ENCODE measurements at regions of chr2 and their contacts with region 1.

Region 1: GRCh38 chr2:40431600-40431955 is 20.3 kb downstream of the SLC8A1 start:
- DNase-seq: peak; percentile 77 to 81
- ATAC-seq: no peak
- H3K4me3 ChIP-seq: no peak overlapping the region
- H3K27ac ChIP-seq: peak overlapping the region; percentile 15 to 46
- H3K4me1 ChIP-seq: peaks cover 5 to 17% of the 10 kb centered on the region in 2 donors
- H3K27me3 ChIP-seq: no peaks in the 10 kb centered on the region

Region 2: DNA sequence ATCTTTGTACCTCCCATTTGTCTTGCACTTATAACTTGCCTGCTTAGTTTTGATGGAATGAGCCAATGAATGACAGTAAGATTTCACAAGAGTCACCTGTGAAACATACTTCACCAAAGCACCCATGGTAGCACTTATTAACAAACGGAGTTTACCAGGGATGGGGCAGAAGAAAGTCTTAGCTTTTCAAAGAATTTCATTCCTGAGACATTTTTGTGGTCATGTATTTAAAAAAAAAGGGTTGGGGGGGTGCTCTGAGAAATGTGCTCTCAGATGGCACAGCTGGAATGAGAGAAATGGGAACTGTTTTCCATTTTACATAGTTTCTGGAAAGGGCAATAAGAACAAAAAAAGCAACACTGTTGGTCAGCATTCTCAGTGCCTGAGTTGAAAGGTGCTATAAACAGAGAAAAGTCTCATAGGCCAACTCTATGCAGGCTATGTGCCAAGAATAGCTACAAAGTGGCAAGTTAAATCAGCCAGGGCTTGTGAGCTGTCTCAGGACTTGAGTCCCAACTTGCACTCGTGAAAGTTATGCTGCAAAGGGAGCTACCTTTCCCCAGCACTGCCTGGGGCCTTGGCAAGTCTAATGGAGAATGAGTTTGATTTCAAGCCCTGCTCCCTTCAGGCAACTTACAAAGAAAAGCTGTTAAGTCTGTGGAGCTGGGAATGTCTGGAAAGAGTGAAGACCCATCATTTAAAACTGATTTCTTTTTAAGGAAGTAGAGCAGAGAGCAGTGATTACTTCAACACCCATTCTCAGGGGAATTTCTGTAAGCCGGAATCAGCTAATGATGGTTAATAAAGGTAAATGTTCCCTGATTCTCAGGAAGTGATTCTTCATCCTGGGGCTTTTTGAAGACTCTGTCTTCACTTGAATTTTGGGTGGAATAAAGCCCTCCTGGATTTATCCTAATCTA is 150.3 kb before region 1 on chr2:
- intact Hi-C with region 1: loop called in 1 of 2 experiments (anchors 10 kb)
- DNase-seq: no peak
- ATAC-seq: peak; percentile 72
- H3K4me3 ChIP-seq: no peak overlapping the region
- H3K27ac ChIP-seq: peak overlapping the region; percentile 76 to 78
- H3K4me1 ChIP-seq: peaks cover 4 to 5% of the 10 kb centered on the region in 2 donors
- H3K27me3 ChIP-seq: no peaks in the 10 kb centered on the region

Region 3: DNA sequence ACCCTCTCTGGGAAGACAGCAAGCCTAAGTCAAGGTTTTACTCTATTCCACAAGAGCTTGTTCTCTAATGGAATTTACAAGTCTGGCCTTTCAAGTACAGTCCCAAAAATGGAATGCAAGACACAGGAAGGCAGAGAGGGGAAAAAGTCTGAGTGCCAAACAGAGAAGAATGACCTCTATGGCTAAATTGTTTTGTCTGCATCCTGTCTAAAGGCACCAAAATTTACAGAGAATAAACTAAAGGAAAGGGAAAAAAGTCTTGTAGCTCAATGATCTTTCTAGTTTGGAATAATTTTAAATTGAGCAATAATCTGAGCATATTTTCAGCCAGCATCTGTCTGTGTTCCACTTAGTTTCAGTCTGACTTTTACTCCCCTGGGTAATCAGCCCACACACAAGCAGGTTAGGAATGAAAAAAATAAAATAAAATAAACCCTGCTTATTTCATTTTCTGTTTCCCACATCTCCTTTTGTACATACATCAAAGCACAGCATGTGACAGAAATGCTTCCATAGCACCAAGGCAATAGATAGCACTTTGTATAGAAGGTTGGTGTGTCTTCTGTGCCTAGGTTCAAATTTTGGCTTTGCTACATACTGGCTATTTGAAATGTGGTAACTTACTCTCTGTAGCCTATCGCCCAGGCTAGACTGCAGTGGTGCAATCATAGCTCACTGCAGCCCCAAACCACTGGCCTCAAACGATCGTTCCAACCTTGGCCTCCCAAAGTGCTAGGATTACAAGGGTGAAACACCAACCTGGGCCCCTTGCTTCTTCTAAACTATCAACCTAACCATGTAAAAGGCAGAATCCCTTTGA is 84.8 kb before region 1 on chr2:
- intact Hi-C with region 1: loop called in 1 of 2 experiments (anchors 10 kb)
- DNase-seq: no peak
- ATAC-seq: peak; percentile 69
- H3K4me3 ChIP-seq: peak overlapping the region in 1 of 2 donors; percentile 34
- H3K27ac ChIP-seq: peak overlapping the region; percentile 83 to 95
- H3K4me1 ChIP-seq: peaks cover 4 to 11% of the 10 kb centered on the region in 2 donors
- H3K27me3 ChIP-seq: no peaks in the 10 kb centered on the region

Region 4: DNA sequence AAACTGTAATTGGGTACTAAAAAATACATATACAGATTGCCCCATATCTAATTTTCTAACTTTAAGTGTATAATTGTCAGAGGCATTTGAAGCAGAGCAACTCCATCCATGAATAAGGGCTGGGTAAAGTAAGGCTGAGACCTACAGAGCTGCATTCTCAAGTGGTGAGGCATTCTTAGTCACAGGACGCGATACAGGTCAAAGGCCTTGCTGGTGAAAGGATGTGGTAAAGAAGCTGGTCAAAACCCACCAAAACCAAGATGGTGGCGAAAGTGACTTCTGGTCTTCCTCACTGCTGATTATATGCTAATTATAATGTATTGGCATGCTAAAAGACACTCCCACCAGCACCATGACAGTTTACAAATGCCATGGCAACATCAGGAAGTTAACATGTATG is 29.7 kb before region 1 on chr2:
- intact Hi-C with region 1: loop called in 1 of 2 experiments (anchors 5 kb)
- DNase-seq: no peak
- ATAC-seq: no peak
- H3K4me3 ChIP-seq: no peak overlapping the region
- H3K27ac ChIP-seq: no peak overlapping the region
- H3K4me1 ChIP-seq: peaks cover 0 to 5% of the 10 kb centered on the region in 2 donors
- H3K27me3 ChIP-seq: no peaks in the 10 kb centered on the region